GM12878 (cell line): ENCODE measurements at regions of chr15 and their contacts with region 1.

Region 1: DNA sequence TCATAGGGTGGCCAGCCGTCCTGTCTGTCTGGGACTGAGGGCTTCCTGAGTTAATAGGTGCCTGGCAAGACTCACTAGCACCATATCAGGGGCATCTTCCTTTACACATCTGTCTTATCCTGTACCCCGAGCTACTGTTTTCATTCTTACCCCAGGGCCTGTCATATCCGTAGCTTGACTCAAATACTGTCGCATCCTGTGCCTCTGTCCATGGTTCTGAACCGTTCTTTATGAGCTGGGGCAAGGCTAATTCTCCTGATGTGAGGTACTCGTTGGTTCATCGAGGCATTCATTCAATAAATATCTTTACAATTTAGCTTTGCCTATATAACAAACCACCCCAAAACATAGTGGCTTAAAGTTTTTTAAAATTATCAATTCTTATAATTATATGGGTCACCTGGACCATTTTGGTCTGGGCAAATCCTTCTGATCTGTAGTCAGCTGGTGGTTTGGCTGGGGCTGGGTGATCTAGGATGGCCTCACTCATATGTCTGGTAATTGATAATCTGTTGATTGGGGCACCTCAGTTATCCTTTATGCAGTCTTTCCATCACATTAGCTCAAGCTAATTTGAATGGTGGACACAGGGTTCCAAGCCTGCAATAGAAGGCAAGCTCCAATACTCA is 121.2 kb downstream of the TLE3 start:
- DNase-seq: no peak
- ATAC-seq: peak; percentile 40; the same call in 2 of the 3 replicates
- H3K4me3 ChIP-seq: no peak overlapping the region
- H3K27ac ChIP-seq: no peak overlapping the region
- H3K4me1 ChIP-seq: peaks cover 30% of the 10 kb centered on the region
- H3K27me3 ChIP-seq: no peaks in the 10 kb centered on the region; a peak in 1 of 4 replicates
- CTCF ChIP-seq: no peak
- EP300 ChIP-seq: no peak
- POLR2A ChIP-seq: no peak
- RAD21 ChIP-seq: no peak

Region 2: GRCh38 chr15:69576035-69576526 is 400.4 kb before region 1 on chr15:
- CTCF ChIA-PET with region 1: no interaction called
- POLR2A ChIA-PET with region 1: no interaction called
- RAD21 ChIA-PET with region 1: no interaction called
- SMC1A ChIA-PET with region 1: no interaction called
- in situ Hi-C with region 1: no loop called
- intact Hi-C with region 1: loop called (anchors 10 kb)
- DNase-seq: peak; percentile 13
- ATAC-seq: peak; percentile 93
- H3K4me3 ChIP-seq: no peak overlapping the region
- H3K27ac ChIP-seq: no peak overlapping the region
- H3K4me1 ChIP-seq: peaks cover 5% of the 10 kb centered on the region; the same call in 1 of the 2 replicates
- H3K27me3 ChIP-seq: peaks cover 0 to 3% of the 10 kb centered on the region in 2 experiments
- CTCF ChIP-seq: peak; percentile 71 to 76 (median 71)
- EP300 ChIP-seq: no peak
- POLR2A ChIP-seq: no peak
- RAD21 ChIP-seq: peak; percentile 71

Region 3: DNA sequence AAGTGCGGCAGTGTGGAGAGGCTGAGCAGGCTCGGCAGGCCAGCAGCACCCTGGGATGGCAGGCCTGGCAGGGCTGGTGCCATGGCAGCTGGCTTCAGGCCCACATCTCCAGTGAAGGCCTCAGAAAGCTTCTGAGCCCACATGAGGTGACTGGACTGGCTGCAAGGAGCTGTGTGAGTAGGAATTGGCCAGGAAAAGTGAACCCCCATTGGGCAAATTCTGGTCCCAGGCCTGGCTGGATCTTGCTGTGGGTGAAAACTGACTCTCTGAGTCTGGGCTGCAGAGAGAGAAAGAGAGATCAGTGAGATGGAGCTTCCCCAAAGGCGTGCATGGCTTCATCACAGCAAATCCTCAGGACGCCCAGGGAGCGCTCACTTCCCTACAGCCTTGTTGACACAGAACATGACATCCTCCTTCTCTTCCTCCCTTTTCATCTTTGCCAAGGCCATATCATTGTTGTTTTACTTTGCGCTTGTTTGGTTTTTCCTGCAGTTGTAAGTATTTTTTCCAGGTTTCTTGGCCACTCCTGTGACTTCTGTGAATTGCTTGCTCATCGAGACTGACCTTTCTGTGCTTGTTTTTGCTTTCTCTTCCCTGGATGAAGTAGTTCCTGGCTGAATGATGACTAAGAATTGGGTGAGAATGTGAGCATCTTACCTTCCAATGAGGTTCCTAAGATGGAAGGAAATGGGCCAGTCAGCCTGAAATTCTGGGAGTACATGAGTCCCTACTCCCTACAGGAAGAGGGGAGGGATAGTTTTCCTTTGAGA is 177.8 kb before region 1 on chr15:
- CTCF ChIA-PET with region 1: no interaction called
- POLR2A ChIA-PET with region 1: no interaction called
- RAD21 ChIA-PET with region 1: no interaction called
- SMC1A ChIA-PET with region 1: no interaction called
- in situ Hi-C with region 1: no loop called
- intact Hi-C with region 1: no loop called
- DNase-seq: no peak
- ATAC-seq: no peak
- H3K4me3 ChIP-seq: no peak overlapping the region
- H3K27ac ChIP-seq: no peak overlapping the region
- H3K4me1 ChIP-seq: no peaks in the 10 kb centered on the region
- H3K27me3 ChIP-seq: peaks cover 2 to 3% of the 10 kb centered on the region in 2 experiments; a peak in 3 of 4 replicates
- CTCF ChIP-seq: no peak
- EP300 ChIP-seq: no peak
- POLR2A ChIP-seq: no peak
- RAD21 ChIP-seq: no peak

Region 4: GRCh38 chr15:69987492-69988482 is 11.3 kb after region 1 on chr15:
- CTCF ChIA-PET with region 1: no interaction called
- POLR2A ChIA-PET with region 1: no interaction called
- RAD21 ChIA-PET with region 1: no interaction called
- SMC1A ChIA-PET with region 1: no interaction called
- in situ Hi-C with region 1: no loop called
- intact Hi-C with region 1: no loop called
- DNase-seq: no peak
- ATAC-seq: no peak
- H3K4me3 ChIP-seq: no peak overlapping the region
- H3K27ac ChIP-seq: no peak overlapping the region
- H3K4me1 ChIP-seq: peaks cover 9% of the 10 kb centered on the region
- H3K27me3 ChIP-seq: peaks cover 0 to 2% of the 10 kb centered on the region in 2 experiments; a peak in 2 of 4 replicates
- CTCF ChIP-seq: no peak
- EP300 ChIP-seq: no peak
- POLR2A ChIP-seq: no peak
- RAD21 ChIP-seq: no peak

Region 5: GRCh38 chr15:70014860-70015490 is 38.5 kb after region 1 on chr15:
- CTCF ChIA-PET with region 1: interaction called, 3 read pairs
- POLR2A ChIA-PET with region 1: interaction called, 4 read pairs
- RAD21 ChIA-PET with region 1: interaction called, 8 read pairs
- SMC1A ChIA-PET with region 1: interaction called, 5 read pairs
- in situ Hi-C with region 1: no loop called
- intact Hi-C with region 1: loop called (anchors 2 kb)
- DNase-seq: peak; percentile 93
- ATAC-seq: peak; percentile 89
- H3K4me3 ChIP-seq: peak overlapping the region; percentile 10; the same call in 1 of the 2 replicates
- H3K27ac ChIP-seq: peak overlapping the region; percentile 84
- H3K4me1 ChIP-seq: peaks cover 60% of the 10 kb centered on the region
- H3K27me3 ChIP-seq: no peaks in the 10 kb centered on the region
- CTCF ChIP-seq: peak in 1 of 3 experiments; percentile 54; a peak in 2 of 6 replicates
- EP300 ChIP-seq: peak; percentile 76 to 79; a peak in 3 of 4 replicates
- POLR2A ChIP-seq: peak; percentile 79
- RAD21 ChIP-seq: peak; percentile 44; the same call in 1 of the 2 replicates